ENCODE measurements at regions of chr3 and their contacts with region 1.

Region 1: DNA sequence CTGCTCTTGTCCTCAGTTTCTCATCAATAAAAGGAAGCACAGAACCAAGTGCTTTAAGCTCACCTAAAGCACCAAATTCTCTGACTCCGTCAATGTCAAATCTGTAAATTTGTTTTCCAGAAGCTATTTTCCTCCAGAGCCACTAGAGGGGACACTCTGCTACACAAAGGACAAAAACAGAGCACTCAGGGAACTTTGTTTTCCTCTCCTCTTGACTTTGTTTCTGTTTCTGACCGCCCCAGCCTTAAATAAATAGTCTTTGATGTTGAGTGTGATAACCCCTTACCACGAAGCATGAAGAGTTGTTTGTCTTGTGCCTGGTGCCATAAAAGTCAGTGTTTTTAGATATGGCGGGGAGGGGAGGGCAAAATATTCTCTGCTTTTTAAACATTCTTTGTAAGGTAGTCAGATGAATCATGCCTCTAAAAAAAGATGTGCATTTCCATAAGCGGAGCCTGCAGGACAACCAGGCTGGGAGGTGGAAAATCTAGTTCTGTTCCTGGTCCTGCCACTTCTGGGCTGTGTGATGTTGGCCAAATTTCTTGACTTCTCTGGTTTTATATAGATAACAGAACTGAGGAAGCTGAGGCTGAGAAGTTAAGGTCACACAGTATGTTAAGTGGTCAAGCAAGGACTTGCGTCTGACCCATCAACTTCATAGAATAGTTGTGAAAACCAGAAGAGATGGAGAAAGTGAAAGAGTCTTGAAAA is 7.3 kb upstream of the ZBTB38 start:
- DNase-seq: no peak
- H3K4me3 ChIP-seq: no peak overlapping the region
- H3K27ac ChIP-seq: no peak overlapping the region
- H3K4me1 ChIP-seq: no peaks in the 10 kb centered on the region
- H3K27me3 ChIP-seq: no peaks in the 10 kb centered on the region
- CTCF ChIP-seq: peak in 2 of 3 experiments; percentile 74 to 87; a peak in 3 of 4 replicates
- EP300 ChIP-seq: no peak
- POLR2A ChIP-seq: no peak
- RAD21 ChIP-seq: peak; percentile 90 to 97

Region 2: DNA sequence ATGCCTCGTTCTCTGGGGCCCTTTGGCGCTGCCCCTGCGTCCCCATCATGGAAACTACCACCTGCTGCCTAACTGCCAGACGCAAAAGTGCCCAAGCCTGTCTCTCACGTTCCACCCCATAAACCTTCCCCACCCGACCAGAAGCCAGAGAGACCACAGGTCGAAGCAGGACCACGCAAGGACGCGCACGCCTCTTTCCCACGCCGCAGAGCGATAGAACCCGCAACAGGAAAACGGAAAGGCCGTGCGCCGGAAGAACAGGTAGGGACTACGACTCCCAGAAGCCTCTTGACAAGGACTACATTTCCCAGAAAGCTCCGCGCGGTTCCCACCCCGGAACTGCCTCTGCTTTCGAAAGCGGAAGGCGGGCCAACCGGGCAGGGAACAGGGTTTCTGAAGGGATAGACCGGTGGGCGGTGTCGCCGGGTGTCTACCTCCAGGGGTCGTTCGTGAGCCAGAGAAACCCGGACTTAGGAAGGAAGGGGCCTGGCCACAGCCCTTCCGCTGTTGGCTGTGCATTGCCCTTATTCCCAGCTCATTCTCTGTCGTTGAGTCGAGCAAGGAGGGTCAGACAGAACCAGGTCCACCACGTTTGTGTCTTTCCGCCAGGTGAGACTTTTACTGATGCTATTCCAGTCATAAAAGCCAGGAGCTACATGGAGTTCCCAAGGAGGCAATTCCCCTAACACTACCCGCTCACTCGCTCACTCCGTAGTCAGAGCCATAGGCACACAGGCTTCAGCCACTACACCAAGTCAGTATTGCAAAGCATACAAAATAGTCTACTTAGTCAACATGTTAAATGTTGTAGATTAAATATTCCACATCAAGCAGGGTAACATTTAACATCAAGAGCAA is 49.3 kb before region 1 on chr3:
- CTCF ChIA-PET with region 1: interaction called, 55 read pairs
- POLR2A ChIA-PET with region 1: no interaction called
- DNase-seq: peak; percentile 94 to 98
- H3K4me3 ChIP-seq: peak overlapping the region; percentile 69 to 99 (median 85)
- H3K27ac ChIP-seq: no peak overlapping the region
- H3K4me1 ChIP-seq: peaks cover 0 to 4% (median 2%) of the 10 kb centered on the region in 4 experiments; a peak in 4 of 7 replicates
- H3K27me3 ChIP-seq: peaks cover 0 to 7% (median 3%) of the 10 kb centered on the region in 4 experiments; a peak in 1 of 7 replicates
- CTCF ChIP-seq: peak; percentile 74 to 91 (median 84)
- EP300 ChIP-seq: no peak
- POLR2A ChIP-seq: peak; percentile 34 to 73
- RAD21 ChIP-seq: peak; percentile 89

Region 3: DNA sequence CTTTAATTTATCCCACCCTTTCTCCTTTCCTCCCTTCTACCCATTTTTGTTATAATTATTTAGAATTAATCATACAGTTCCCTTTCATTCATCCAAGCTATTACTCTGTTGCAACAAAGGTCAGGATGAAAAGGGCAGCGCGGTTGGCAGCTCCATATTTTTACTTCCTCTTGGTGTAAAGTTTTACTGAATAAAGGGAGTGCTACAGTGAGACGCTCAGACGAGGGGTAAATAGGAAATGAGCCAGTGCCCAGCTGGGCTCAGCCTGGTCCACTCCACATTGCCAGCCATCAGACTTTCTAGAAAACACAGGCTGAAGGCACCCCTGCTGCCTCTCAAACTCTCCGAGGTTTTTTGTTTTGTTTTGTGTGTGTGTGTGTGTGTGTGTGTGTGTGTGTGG is 14.6 kb before region 1 on chr3:
- CTCF ChIA-PET with region 1: interaction called, 42 read pairs
- POLR2A ChIA-PET with region 1: no interaction called
- DNase-seq: no peak
- H3K4me3 ChIP-seq: no peak overlapping the region
- H3K27ac ChIP-seq: no peak overlapping the region
- H3K4me1 ChIP-seq: no peaks in the 10 kb centered on the region
- H3K27me3 ChIP-seq: no peaks in the 10 kb centered on the region
- CTCF ChIP-seq: no peak
- EP300 ChIP-seq: no peak
- POLR2A ChIP-seq: no peak
- RAD21 ChIP-seq: no peak

Region 4: GRCh38 chr3:141402476-141403171 is 41.6 kb after region 1 on chr3:
- CTCF ChIA-PET with region 1: interaction called, 21 read pairs
- POLR2A ChIA-PET with region 1: no interaction called
- DNase-seq: peak in 1 of 2 experiments; percentile 77
- H3K4me3 ChIP-seq: peak overlapping the region; percentile 66 to 71 (median 66)
- H3K27ac ChIP-seq: peak overlapping the region; percentile 54; the same call in 1 of the 2 replicates
- H3K4me1 ChIP-seq: peaks cover 0 to 7% (median 4%) of the 10 kb centered on the region in 4 experiments; a peak in 4 of 7 replicates
- H3K27me3 ChIP-seq: peaks cover 0 to 17% (median 8%) of the 10 kb centered on the region in 4 experiments; a peak in 5 of 7 replicates
- CTCF ChIP-seq: no peak
- EP300 ChIP-seq: no peak
- POLR2A ChIP-seq: peak in 1 of 2 experiments; percentile 45; a peak in 2 of 3 replicates
- RAD21 ChIP-seq: no peak

Region 5: DNA sequence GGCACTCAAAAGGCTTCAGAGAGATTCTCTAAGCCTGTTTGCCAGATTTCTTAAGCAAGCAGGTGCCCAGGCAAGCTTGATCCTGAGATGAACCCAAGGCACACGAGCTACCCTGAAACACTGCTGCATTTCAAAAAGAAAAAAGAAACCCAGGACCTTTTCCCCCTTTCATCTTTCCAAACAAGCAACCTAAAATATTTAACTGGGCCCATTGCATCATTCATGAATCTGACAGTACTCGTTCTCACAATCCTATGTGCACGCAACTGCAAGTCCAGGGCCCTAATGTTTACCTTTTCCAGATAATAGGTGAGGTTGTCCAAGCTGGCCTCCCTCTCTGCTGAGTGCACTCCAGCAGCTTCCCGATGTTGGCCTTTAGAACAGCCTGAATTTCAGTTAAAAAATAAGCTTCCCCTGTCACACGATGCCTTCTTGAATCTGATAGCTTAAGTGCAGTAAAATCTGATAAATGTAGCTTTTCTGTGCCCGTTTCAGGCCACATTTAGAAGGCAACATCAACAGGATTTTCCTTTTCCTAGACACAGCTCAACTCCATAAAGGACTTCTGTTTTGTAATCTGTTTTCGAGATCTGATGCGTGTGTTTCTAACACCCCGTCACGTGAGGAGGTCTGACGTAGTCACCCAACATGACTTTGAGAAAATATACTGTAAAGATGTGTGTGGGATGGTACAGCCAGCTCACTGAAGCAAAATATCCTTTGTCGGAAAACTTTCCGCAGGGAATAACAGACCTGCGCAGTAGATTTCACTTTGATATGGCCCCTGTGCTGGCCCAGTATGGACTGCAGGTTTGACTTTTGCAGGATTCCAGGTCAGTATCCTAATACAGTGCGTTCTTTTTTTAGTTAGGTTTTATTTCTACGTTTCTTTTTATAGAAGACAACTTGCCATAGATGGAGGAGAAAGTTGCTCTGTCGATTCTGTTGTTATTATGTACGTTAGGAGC is 70.7 kb after region 1 on chr3:
- CTCF ChIA-PET with region 1: interaction called, 131 read pairs
- POLR2A ChIA-PET with region 1: no interaction called
- DNase-seq: no peak
- H3K4me3 ChIP-seq: no peak overlapping the region
- H3K27ac ChIP-seq: no peak overlapping the region
- H3K4me1 ChIP-seq: peaks cover 0 to 6% (median 0%) of the 10 kb centered on the region in 4 experiments; a peak in 3 of 7 replicates
- H3K27me3 ChIP-seq: no peaks in the 10 kb centered on the region
- CTCF ChIP-seq: no peak
- EP300 ChIP-seq: no peak
- POLR2A ChIP-seq: no peak
- RAD21 ChIP-seq: no peak

Region 6: GRCh38 chr3:141452036-141452435 is 91.0 kb after region 1 on chr3:
- CTCF ChIA-PET with region 1: interaction called, 101 read pairs
- POLR2A ChIA-PET with region 1: no interaction called
- DNase-seq: no peak
- H3K4me3 ChIP-seq: no peak overlapping the region
- H3K27ac ChIP-seq: no peak overlapping the region
- H3K4me1 ChIP-seq: peaks cover 0 to 3% (median 0%) of the 10 kb centered on the region in 4 experiments; a peak in 3 of 7 replicates
- H3K27me3 ChIP-seq: no peaks in the 10 kb centered on the region
- CTCF ChIP-seq: peak in 2 of 3 experiments; percentile 65 to 77; a peak in 3 of 4 replicates
- EP300 ChIP-seq: no peak
- POLR2A ChIP-seq: no peak
- RAD21 ChIP-seq: peak; percentile 90 to 92

Region 7: GRCh38 chr3:141561426-141562034 is 200.5 kb after region 1 on chr3:
- CTCF ChIA-PET with region 1: interaction called, 13 read pairs
- POLR2A ChIA-PET with region 1: no interaction called
- DNase-seq: no peak
- H3K4me3 ChIP-seq: no peak overlapping the region
- H3K27ac ChIP-seq: no peak overlapping the region
- H3K4me1 ChIP-seq: no peaks in the 10 kb centered on the region
- H3K27me3 ChIP-seq: no peaks in the 10 kb centered on the region
- CTCF ChIP-seq: peak in 2 of 3 experiments; percentile 67 to 80; a peak in 2 of 4 replicates
- EP300 ChIP-seq: no peak
- POLR2A ChIP-seq: no peak
- RAD21 ChIP-seq: peak; percentile 88 to 97

Measured in H1 (cell line).